ENCODE measurements at regions of chr12 and their contacts with region 1.

Region 1: DNA sequence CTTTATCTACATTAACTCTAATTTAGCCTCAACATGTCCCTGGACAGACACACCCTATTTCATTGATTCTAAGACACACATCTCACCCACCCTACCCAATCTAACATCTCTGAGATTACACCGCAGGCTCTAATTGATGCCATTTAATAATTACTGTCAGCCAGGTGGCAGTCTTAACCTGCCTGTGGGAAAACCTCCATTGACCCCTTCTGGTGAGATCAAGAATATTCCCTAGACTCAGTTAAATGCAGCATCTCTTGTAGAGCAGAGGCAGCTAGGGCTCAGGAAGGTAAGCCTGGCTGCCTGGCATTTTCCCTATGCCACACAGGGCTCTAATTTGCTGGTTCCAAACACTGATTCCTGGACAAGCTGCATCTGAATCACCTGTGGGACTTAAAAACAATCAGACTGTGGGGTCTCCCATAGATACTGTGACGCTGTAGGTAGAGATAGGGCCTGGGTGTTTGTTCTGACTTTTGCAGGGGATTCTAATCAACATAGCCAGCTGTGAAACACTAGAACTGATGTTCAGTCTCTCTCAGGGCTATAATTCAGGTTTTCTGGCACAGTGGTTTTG is 14.3 kb downstream of the MCRS1 start:
- DNase-seq: peak; percentile 50 to 68 (median 56)
- ATAC-seq: peak; percentile 77
- H3K4me3 ChIP-seq: no peak overlapping the region
- H3K27ac ChIP-seq: no peak overlapping the region
- H3K4me1 ChIP-seq: peaks cover 0 to 29% of the 10 kb centered on the region in 2 experiments; a peak in 3 of 5 replicates
- H3K27me3 ChIP-seq: peaks cover 6 to 44% of the 10 kb centered on the region in 2 experiments; a peak in 4 of 5 replicates
- CTCF ChIP-seq: peak; percentile 73 to 99 (median 98)
- EP300 ChIP-seq: no peak; the same call in 1 of the 2 replicates
- POLR2A ChIP-seq: no peak
- RAD21 ChIP-seq: peak; percentile 50 to 83

Region 2: GRCh38 chr12:49567611-49568441 is 14.2 kb after region 1 on chr12 and contains the start of gene MCRS1:
- CTCF ChIA-PET with region 1: interaction called, 3 read pairs
- POLR2A ChIA-PET with region 1: interaction called, 12 read pairs
- in situ Hi-C with region 1: no loop called
- intact Hi-C with region 1: no loop called
- DNase-seq: peak; percentile 96 to 98 (median 98)
- ATAC-seq: peak; percentile 91
- H3K4me3 ChIP-seq: peak within 1 kb of the TSS; percentile 81
- H3K27ac ChIP-seq: peak within 1 kb of the TSS; percentile 90
- H3K4me1 ChIP-seq: peaks cover 5 to 8% of the 10 kb centered on the region in 2 experiments; a peak in 3 of 5 replicates
- H3K27me3 ChIP-seq: no peaks in the 10 kb centered on the region
- CTCF ChIP-seq: no peak
- EP300 ChIP-seq: no peak
- POLR2A ChIP-seq: peak; percentile 98
- RAD21 ChIP-seq: no peak
- polyA plus RNA-seq, gene MCRS1: 60.8 to 98.6 TPM

Region 3: GRCh38 chr12:49580572-49581535 is 27.3 kb after region 1 on chr12:
- CTCF ChIA-PET with region 1: interaction called, 20 read pairs
- POLR2A ChIA-PET with region 1: interaction called, 4 read pairs
- in situ Hi-C with region 1: no loop called
- intact Hi-C with region 1: no loop called
- DNase-seq: peak; percentile 71 to 82 (median 74)
- ATAC-seq: peak; percentile 98
- H3K4me3 ChIP-seq: no peak overlapping the region
- H3K27ac ChIP-seq: no peak overlapping the region
- H3K4me1 ChIP-seq: peaks cover 5 to 20% of the 10 kb centered on the region in 2 experiments; a peak in 4 of 5 replicates
- H3K27me3 ChIP-seq: no peaks in the 10 kb centered on the region
- CTCF ChIP-seq: peak; percentile 84 to 93 (median 92)
- EP300 ChIP-seq: no peak
- POLR2A ChIP-seq: no peak
- RAD21 ChIP-seq: peak; percentile 63 to 86

Region 4: DNA sequence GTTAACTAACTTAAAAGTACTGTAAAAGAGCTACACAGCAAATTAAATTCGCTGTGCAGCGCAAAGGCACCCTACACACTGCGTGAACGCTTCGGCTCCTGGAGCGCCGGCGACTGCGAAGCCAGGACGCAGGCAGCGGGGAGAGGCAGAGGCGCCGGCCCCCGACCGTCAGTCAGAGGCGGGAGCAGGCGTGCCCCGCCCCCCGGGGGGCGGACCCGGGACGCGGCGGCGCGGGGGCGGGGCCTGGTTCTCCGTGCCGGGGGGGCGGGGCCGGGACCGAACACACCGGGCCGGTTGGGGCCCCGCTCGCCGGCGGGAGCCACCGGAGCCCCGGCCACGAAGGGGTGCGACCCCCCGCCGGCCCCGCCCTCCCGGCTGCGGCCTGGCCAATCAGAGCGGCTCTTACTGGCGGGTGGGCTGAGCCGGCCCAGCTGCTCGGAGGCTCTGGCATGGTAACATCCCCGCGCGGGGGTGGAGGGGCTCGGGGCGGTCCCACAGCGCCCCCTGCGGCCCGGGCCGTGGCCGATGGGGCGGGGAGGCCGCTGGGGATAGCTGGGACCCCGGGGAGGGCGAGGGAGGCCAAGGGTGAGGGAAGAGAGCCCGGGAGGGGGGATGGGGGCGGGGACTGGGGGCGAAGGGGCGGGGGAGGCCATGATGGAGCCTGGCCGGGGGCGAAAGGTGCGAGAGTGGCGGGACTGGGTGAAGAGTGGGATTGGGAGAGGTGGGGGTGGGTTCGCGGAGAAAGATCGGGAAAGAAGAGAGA is 69.7 kb after region 1 on chr12 and contains the start of gene PRPF40B:
- CTCF ChIA-PET with region 1: no interaction called
- POLR2A ChIA-PET with region 1: interaction called, 3 read pairs
- in situ Hi-C with region 1: no loop called
- intact Hi-C with region 1: loop called (anchors 1 kb)
- DNase-seq: peak; percentile 91 to 99 (median 99)
- ATAC-seq: peak; percentile 93
- H3K4me3 ChIP-seq: peak within 1 kb of the TSS; percentile 46
- H3K27ac ChIP-seq: peak within 1 kb of the TSS; percentile 66
- H3K4me1 ChIP-seq: peaks cover 15 to 22% of the 10 kb centered on the region in 2 experiments
- H3K27me3 ChIP-seq: no peaks in the 10 kb centered on the region
- CTCF ChIP-seq: peak; percentile 51 to 88 (median 76); a peak in 5 of 6 replicates
- EP300 ChIP-seq: no peak
- POLR2A ChIP-seq: peak; percentile 89
- RAD21 ChIP-seq: peak in 1 of 2 experiments; percentile 58; a peak in 2 of 4 replicates
- polyA plus RNA-seq, gene PRPF40B: 0.55 to 0.85 TPM

Region 5: DNA sequence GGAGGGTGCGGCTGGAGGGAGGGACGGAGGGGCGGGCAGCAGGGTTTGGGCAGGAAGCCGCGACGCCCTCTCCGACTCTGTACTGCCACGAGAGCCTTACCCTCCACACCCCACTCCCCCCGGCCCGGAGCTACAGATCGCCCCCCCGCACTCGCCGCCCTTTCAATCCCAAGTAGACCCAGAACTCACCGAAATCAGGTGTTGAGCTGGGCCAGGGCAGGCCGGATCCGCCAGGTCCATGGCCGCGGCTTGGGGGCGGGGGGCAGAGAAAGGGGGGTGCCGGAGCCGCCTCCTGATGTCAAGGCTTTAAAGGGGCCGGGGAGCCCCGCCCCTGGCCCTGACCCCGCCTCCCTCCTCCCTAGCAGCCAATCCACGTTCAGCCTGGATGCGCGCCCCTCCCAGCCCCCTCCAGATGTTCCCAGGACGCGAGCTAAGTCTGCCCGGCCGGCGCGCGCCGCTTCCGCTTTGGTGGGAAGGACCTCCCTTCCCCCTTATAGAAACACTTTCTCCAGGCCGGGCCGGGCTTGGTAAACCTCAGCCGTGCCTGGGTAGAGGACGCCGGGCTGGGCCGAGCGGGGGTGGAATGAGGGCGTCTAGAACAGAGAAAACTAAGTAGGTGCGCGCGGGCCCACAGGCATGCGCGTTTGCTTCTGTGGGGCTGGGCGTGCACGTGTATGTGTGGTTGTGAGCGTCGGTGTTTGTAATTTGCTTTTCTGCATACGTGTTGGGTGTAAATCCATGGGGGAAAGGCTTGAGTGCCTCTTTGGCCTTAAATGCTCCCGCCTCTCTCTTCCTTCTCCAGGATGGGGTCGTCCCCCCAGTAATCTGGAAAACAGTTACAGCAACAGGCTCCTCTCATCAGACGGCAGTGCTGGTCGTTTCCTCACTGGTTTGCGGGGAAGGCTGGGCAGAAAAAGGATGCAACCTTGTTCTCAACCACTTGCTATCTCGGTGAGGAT is 274.8 kb after region 1 on chr12 and contains the start of gene NCKAP5L:
- CTCF ChIA-PET with region 1: no interaction called
- POLR2A ChIA-PET with region 1: no interaction called
- in situ Hi-C with region 1: no loop called
- intact Hi-C with region 1: no loop called
- DNase-seq: peak; percentile 97 to 99 (median 99)
- ATAC-seq: peak; percentile 97
- H3K4me3 ChIP-seq: peak within 1 kb of the TSS; percentile 85
- H3K27ac ChIP-seq: peak within 1 kb of the TSS; percentile 64
- H3K4me1 ChIP-seq: peaks cover 29 to 35% of the 10 kb centered on the region in 2 experiments
- H3K27me3 ChIP-seq: no peaks in the 10 kb centered on the region
- CTCF ChIP-seq: no peak
- EP300 ChIP-seq: no peak; the same call in 1 of the 2 replicates
- POLR2A ChIP-seq: peak; percentile 86
- RAD21 ChIP-seq: no peak
- polyA plus RNA-seq, gene NCKAP5L: 0.01 to 0.04 TPM